ENCODE measurements at regions of chr19 and their contacts with region 1.

Region 1: GRCh38 chr19:41263850-41264580 is at the start of gene HNRNPUL1:
- DNase-seq: peak; percentile 100
- H3K4me3 ChIP-seq: peak within 1 kb of the TSS; percentile 82 to 100 (median 98)
- H3K27ac ChIP-seq: peak within 1 kb of the TSS; percentile 99
- H3K4me1 ChIP-seq: peaks cover 0 to 10% (median 5%) of the 10 kb centered on the region in 4 experiments; a peak in 6 of 7 replicates
- H3K27me3 ChIP-seq: no peaks in the 10 kb centered on the region
- CTCF ChIP-seq: no peak; a peak in 1 of 4 replicates
- EP300 ChIP-seq: no peak
- POLR2A ChIP-seq: peak in 1 of 2 experiments; percentile 68; a peak in 2 of 3 replicates
- RAD21 ChIP-seq: no peak
- total RNA-seq, gene HNRNPUL1: 264 and 268 TPM in 2 replicates

Region 2: DNA sequence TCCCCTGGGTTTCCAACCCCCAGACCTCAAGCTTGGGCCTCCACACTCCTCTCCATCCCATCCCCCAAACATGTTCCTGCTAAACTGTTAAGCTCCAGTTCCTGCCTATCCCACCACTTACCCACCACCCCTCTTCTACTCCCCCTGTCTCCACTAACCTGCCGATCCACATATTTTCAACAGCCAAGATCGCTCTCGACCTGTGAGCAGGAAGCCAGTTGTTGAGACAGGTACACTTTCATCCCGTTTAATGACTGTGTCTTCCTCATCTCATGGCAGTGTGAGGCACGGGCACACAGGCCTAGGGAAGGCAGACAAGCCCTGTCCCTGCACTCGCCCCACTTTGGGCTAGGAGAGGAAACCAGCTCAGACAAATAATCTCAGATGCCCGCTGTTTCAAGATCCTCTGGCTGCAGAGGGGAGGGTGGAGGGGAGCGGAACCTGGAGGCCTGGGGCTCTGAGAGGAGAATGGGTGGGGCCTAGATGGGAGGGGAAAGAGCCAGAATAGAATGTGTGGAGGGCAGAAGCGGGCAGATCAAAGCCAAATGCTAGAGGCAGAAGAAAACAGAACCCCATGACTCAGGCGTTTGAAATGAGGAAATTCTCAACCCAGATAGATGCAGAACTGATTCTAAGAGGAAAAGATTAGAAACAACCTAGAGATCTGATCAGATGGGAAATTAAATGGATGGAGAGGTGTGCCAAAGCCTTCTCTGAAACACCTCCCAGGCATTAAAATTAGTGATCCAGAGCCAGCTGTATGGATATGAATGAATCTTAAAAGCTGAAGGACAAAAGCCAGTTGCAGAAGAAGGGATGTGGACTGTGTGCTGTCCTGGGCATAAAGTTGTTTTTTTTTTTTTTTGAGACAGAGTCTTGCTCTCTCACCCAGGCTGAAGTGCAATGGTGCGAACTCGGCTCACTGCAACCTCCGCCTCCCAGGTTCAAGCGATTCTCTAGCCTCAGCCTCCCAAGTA is 87.9 kb before region 1 on chr19:
- CTCF ChIA-PET with region 1: interaction called, 3 read pairs
- POLR2A ChIA-PET with region 1: interaction called, 10 read pairs
- DNase-seq: peak; percentile 75 to 78
- H3K4me3 ChIP-seq: peak overlapping the region; percentile 22 to 52 (median 34)
- H3K27ac ChIP-seq: peak overlapping the region; percentile 68
- H3K4me1 ChIP-seq: peaks cover 0 to 14% (median 5%) of the 10 kb centered on the region in 4 experiments; a peak in 6 of 7 replicates
- H3K27me3 ChIP-seq: no peaks in the 10 kb centered on the region
- CTCF ChIP-seq: no peak
- EP300 ChIP-seq: no peak; a peak in 1 of 3 replicates
- POLR2A ChIP-seq: no peak
- RAD21 ChIP-seq: no peak

Region 3: DNA sequence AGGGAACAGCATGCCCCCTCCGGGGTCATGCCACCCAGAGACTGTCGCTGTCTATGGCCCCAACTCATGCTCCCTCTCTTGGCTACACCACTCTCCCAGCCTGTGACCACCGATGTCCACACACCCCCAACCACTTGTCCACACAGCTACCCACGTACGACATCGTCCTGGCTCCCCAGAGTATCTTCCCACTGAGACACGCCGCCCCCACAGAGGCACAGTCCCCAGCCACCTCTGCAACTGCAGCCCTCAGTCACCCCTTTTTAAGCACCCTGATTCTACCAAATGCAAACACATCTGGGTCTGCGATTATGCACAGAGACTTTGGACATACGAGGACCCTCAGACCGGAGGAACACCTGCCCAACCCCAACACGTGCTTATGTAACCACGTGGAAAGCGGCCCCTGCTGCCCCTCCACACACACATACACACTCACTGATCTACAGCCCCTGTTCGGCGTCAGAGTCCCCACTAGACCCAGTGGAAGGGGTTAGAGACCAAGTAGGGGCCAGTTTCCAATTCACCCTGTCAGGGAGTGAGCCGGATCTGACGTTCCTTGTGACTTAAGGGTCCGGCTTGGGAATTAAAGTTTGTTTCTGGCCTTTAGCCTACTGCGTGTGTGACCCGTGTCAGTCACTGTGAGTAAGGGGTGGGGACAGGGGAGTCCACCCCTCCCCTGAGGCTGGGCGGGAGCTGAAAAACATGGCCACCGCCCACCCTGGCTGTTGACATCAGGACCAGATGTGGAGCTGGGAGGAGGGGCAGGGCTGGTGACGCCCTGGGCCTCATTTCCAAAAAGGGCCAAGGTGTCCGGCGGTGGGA is 56.9 kb before region 1 on chr19:
- CTCF ChIA-PET with region 1: interaction called, 89 read pairs
- POLR2A ChIA-PET with region 1: interaction called, 67 read pairs
- DNase-seq: no peak
- H3K4me3 ChIP-seq: no peak overlapping the region
- H3K27ac ChIP-seq: no peak overlapping the region
- H3K4me1 ChIP-seq: no peaks in the 10 kb centered on the region
- H3K27me3 ChIP-seq: no peaks in the 10 kb centered on the region
- CTCF ChIP-seq: no peak
- EP300 ChIP-seq: no peak
- POLR2A ChIP-seq: no peak
- RAD21 ChIP-seq: no peak

Region 4: DNA sequence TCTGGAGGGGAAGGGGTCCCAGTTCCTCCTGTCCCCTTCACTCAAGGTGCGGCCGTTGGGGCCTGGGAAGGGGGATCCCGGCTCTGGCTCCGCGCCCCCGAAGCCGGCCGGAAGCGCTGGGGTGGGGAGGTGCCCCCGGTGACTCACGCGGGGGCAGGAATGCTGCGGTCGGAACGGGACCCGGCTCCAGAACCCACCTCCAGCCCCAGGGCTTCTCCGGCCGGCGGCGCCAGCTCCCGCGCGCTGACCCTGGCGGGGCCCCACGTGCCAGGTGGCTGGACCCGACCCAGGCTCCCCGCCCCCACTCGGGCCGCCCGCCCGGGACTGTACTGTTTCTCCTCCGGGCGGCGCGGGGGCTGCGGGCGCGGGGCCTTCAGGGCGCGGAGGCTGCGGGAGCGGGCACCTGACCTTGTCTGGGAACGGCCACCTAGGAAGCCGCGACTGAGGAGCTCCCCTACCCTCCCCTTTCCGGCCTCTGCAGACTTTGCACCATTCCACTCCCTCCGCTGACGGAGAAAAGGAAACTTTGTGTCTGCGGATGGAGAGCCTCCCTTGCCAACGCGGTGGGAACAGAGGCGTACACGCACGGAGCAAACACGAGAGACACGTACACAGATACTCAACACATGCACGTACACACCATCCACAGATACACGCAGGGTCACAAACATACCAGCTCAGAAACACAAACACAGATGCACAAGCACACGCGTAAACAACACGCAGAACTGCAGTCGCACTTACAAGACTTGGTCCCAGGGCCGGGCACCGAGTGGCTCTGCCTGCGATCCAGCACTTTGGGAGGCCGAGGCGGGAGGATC is 37.8 kb before region 1 on chr19:
- CTCF ChIA-PET with region 1: interaction called, 7 read pairs
- POLR2A ChIA-PET with region 1: interaction called, 66 read pairs
- DNase-seq: peak in 1 of 2 experiments; percentile 79
- H3K4me3 ChIP-seq: peak overlapping the region; percentile 24 to 56 (median 38)
- H3K27ac ChIP-seq: peak overlapping the region; percentile 54
- H3K4me1 ChIP-seq: peaks cover 8 to 26% (median 17%) of the 10 kb centered on the region in 4 experiments
- H3K27me3 ChIP-seq: no peaks in the 10 kb centered on the region
- CTCF ChIP-seq: no peak
- EP300 ChIP-seq: no peak
- POLR2A ChIP-seq: peak in 1 of 2 experiments; percentile 63; a peak in 2 of 3 replicates
- RAD21 ChIP-seq: no peak

Region 5: GRCh38 chr19:41278478-41278877 is 14.5 kb after region 1 on chr19:
- CTCF ChIA-PET with region 1: interaction called, 3 read pairs
- POLR2A ChIA-PET with region 1: interaction called, 13 read pairs
- DNase-seq: no peak
- H3K4me3 ChIP-seq: no peak overlapping the region
- H3K27ac ChIP-seq: no peak overlapping the region
- H3K4me1 ChIP-seq: no peaks in the 10 kb centered on the region
- H3K27me3 ChIP-seq: no peaks in the 10 kb centered on the region
- CTCF ChIP-seq: no peak
- EP300 ChIP-seq: no peak
- POLR2A ChIP-seq: no peak
- RAD21 ChIP-seq: no peak

Region 6: GRCh38 chr19:41351339-41352245 is 87.6 kb after region 1 on chr19:
- CTCF ChIA-PET with region 1: no interaction called
- POLR2A ChIA-PET with region 1: no interaction called
- DNase-seq: peak in 1 of 2 experiments; percentile 78
- H3K4me3 ChIP-seq: peak overlapping the region; percentile 52 to 75 (median 70)
- H3K27ac ChIP-seq: no peak overlapping the region
- H3K4me1 ChIP-seq: peaks cover 0 to 14% (median 4%) of the 10 kb centered on the region in 4 experiments; a peak in 5 of 7 replicates
- H3K27me3 ChIP-seq: peaks cover 10 to 36% (median 28%) of the 10 kb centered on the region in 4 experiments
- CTCF ChIP-seq: no peak
- EP300 ChIP-seq: no peak
- POLR2A ChIP-seq: no peak
- RAD21 ChIP-seq: no peak

Measured in H1 (cell line).